ENCODE measurements at regions of chr1 and their contacts with region 1.

Region 1: DNA sequence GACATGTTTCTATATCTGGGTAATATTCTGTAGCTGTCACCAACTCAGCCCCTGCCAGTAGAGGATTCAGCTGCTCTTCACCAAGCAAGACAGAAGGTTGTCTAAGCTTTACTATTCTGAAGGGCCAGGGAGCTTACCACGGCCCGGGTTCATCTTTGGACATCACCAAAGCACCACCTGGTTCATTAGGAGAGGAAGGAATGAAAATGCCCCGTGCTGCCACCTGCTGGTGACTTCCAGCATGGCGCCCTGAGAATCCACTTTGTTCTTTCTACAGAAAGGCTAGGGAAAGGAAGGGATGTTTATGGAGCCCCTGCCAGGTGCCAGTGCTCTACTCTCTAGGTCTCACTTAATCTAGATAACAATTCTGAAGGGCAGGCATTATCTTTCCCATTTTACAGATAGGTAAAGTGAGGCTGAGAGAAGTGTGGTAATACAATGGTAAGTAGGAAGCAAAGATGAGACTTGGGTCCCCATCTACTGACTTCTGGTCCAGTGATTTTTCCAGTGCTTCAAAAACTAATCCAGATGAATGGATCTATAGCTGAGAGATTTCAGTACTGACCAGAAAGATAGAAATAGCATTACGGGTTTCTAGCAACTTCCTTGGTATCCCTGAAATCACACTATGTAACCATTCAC is 79.5 kb downstream of the BEND5 start:
- DNase-seq: peak; percentile 40
- H3K4me3 ChIP-seq: no peak overlapping the region
- H3K27ac ChIP-seq: no peak overlapping the region
- H3K4me1 ChIP-seq: peaks cover 37% of the 10 kb centered on the region
- H3K27me3 ChIP-seq: no peaks in the 10 kb centered on the region
- CTCF ChIP-seq: peak; percentile 92 to 96

Region 2: DNA sequence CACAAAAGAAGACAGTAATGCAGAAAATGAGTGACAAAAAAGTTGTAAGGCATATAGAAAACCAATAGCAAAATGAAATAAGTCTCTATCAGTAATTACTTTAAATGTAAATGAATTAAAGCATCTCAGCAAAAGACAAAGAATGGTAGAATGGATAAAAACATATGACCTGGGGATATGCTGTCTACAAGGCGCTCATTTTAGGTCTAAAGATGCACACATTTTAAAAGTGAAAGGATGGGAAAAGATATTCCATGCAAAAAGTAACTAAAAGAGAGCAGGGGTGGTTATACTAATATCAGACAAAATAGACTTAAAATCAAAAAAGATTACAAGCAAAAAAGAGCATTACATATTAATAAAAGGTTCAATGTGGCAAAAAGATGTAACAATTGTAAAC is 266.4 kb before region 1 on chr1:
- CTCF ChIA-PET with region 1: no interaction called
- dilution Hi-C with region 1: no loop called
- in situ Hi-C with region 1: no loop called
- intact Hi-C with region 1: no loop called
- DNase-seq: no peak
- H3K4me3 ChIP-seq: no peak overlapping the region
- H3K27ac ChIP-seq: no peak overlapping the region
- H3K4me1 ChIP-seq: no peaks in the 10 kb centered on the region
- H3K27me3 ChIP-seq: no peaks in the 10 kb centered on the region
- CTCF ChIP-seq: no peak

Region 3: DNA sequence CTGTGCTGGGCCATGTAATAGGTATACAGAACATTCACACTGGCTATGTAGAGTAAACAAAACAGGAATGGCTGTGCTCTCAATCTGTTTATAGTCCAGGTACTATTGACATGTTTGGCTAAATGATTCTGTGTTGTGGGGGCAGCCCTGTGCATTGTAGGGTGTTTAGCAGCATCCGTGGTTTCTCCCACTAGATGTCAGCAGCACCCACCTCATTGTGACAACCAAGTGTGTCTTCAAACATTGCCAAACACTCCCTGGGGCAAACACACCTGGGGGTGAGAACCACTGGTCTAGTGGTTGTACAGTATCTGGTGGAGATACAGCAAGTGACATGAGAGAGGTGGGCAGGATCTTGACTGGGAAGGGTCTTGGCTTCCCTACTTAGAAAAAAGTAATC is 144.8 kb before region 1 on chr1:
- CTCF ChIA-PET with region 1: interaction called, 3 read pairs
- dilution Hi-C with region 1: no loop called
- in situ Hi-C with region 1: no loop called
- intact Hi-C with region 1: loop called (anchors 1 kb)
- DNase-seq: peak; percentile 37
- H3K4me3 ChIP-seq: no peak overlapping the region
- H3K27ac ChIP-seq: no peak overlapping the region
- H3K4me1 ChIP-seq: peaks cover 21% of the 10 kb centered on the region
- H3K27me3 ChIP-seq: no peaks in the 10 kb centered on the region
- CTCF ChIP-seq: peak; percentile 45 to 70

Region 4: GRCh38 chr1:48563021-48563420 is 134.2 kb before region 1 on chr1:
- CTCF ChIA-PET with region 1: no interaction called
- dilution Hi-C with region 1: no loop called
- in situ Hi-C with region 1: loop called in 1 of 2 experiments (anchors 10 kb)
- intact Hi-C with region 1: no loop called
- DNase-seq: no peak
- H3K4me3 ChIP-seq: no peak overlapping the region
- H3K27ac ChIP-seq: no peak overlapping the region
- H3K4me1 ChIP-seq: peaks cover under 1% of the 10 kb centered on the region
- H3K27me3 ChIP-seq: no peaks in the 10 kb centered on the region
- CTCF ChIP-seq: no peak

Region 5: GRCh38 chr1:48572646-48573261 is 124.4 kb before region 1 on chr1:
- CTCF ChIA-PET with region 1: interaction called, 4 read pairs
- dilution Hi-C with region 1: no loop called
- in situ Hi-C with region 1: loop called (anchors 10 kb)
- intact Hi-C with region 1: loop called (anchors 1 kb)
- DNase-seq: peak; percentile 49
- H3K4me3 ChIP-seq: no peak overlapping the region
- H3K27ac ChIP-seq: no peak overlapping the region
- H3K4me1 ChIP-seq: peaks cover 12% of the 10 kb centered on the region
- H3K27me3 ChIP-seq: no peaks in the 10 kb centered on the region
- CTCF ChIP-seq: peak; percentile 85 to 88

Region 6: DNA sequence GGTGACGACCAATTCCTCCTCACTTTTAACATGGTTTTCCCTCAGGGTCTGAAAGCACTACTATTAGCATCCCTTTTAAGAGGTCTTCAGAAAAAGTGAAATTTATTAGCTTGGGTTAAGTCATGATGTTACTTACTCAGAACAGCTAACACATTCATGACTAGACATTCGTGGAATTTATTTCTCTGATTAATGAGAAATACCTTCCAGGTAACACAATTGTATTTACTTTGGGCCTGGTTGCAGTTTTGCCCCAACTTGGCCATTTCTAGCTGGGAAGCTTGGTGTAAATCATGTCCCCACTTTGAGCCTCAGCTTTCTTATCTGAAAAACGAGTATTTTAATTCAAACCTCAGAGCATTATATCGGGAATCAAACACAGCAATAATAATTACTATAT is 106.0 kb before region 1 on chr1:
- CTCF ChIA-PET with region 1: no interaction called
- dilution Hi-C with region 1: no loop called
- in situ Hi-C with region 1: no loop called
- intact Hi-C with region 1: no loop called
- DNase-seq: peak; percentile 35
- H3K4me3 ChIP-seq: no peak overlapping the region
- H3K27ac ChIP-seq: no peak overlapping the region
- H3K4me1 ChIP-seq: no peaks in the 10 kb centered on the region
- H3K27me3 ChIP-seq: peaks cover 3% of the 10 kb centered on the region
- CTCF ChIP-seq: no peak

Region 7: GRCh38 chr1:48677306-48678287 is 19.6 kb before region 1 on chr1:
- CTCF ChIA-PET with region 1: interaction called, 10 read pairs
- dilution Hi-C with region 1: no loop called
- in situ Hi-C with region 1: no loop called
- intact Hi-C with region 1: loop called (anchors 1 kb)
- DNase-seq: peak; percentile 49
- H3K4me3 ChIP-seq: no peak overlapping the region
- H3K27ac ChIP-seq: no peak overlapping the region
- H3K4me1 ChIP-seq: peaks cover 11% of the 10 kb centered on the region
- H3K27me3 ChIP-seq: no peaks in the 10 kb centered on the region
- CTCF ChIP-seq: peak; percentile 59 to 74

Region 8: DNA sequence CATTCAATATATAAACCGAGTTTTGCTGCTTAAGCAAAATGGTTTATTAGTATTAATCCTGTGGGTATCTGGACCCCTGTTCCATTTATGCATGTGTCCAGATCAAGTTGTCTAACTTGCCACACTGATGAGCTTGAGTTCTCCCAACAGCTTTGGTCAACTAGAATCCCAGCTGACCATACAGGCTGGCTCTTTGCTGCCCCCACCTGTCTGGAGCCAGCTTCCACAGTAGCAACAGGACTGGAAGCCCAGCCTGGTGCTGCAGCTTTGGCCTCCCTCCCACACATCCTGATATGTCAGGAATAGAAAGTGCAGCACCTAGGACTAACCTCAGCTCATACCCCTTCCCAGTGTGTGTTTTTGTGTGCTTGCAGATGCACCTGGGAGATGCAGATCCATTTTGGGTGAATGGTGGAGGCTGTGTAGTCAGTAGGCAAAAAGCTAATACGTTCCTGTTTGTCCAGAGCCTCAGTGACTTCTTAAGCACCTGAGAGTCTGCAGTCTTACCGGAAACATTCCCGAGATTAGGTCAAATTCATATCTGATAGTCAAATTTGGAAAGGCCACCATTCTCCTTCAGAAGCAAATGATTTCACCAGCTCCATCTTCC is 120.4 kb after region 1 on chr1:
- CTCF ChIA-PET with region 1: no interaction called
- dilution Hi-C with region 1: no loop called
- in situ Hi-C with region 1: no loop called
- intact Hi-C with region 1: loop called (anchors 5 kb)
- DNase-seq: peak; percentile 47
- H3K4me3 ChIP-seq: no peak overlapping the region
- H3K27ac ChIP-seq: no peak overlapping the region
- H3K4me1 ChIP-seq: no peaks in the 10 kb centered on the region
- H3K27me3 ChIP-seq: no peaks in the 10 kb centered on the region
- CTCF ChIP-seq: peak; percentile 94 to 97

Region 9: DNA sequence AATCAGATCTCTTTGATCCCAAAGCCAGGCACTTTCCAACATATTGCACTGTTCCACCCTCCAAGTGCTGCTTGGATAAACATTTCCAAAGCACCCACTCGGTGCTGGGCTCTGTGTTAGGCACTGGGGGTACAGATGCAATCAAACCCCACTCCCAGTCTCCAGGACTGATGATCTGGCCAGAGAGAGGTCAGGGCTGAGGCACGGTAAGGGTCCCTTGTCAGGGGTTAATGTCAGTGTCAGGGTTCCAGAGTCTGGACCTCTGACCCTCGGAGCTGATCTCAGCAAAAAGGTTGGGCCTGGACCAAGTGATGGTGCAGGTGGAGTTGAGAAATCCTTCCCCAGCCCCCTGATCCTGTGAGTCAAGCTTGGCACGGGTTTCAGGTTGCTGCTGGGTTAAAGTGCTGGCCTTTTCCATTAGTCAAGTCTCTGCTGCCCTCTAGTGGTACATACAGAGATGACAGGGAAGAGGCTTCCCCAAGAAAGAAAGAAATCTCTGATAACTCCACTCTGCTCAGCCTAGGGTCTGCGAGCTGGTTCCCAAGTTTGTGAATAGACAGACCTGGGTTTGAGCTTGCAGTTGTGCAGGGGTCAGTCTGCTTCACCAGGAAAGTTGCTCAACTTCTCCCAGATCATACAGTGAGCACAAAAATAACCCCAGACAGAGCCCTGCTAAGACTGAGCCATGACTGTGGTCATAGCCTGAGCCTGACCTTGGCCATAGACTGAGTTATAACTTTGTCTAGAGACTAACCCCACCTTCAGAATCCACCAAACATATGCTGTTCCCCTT is 1651.5 kb after region 1 on chr1:
- CTCF ChIA-PET with region 1: no interaction called
- dilution Hi-C with region 1: no loop called
- in situ Hi-C with region 1: no loop called
- intact Hi-C with region 1: loop called (anchors 10 kb)
- DNase-seq: peak; percentile 59
- H3K4me3 ChIP-seq: no peak overlapping the region
- H3K27ac ChIP-seq: no peak overlapping the region
- H3K4me1 ChIP-seq: no peaks in the 10 kb centered on the region
- H3K27me3 ChIP-seq: no peaks in the 10 kb centered on the region
- CTCF ChIP-seq: peak; percentile 81 to 83

Measured in mammary epithelial cell (primary cell).